GM18951 (cell line): ENCODE measurements at regions of chr11 and their contacts with region 1.

Region 1: DNA sequence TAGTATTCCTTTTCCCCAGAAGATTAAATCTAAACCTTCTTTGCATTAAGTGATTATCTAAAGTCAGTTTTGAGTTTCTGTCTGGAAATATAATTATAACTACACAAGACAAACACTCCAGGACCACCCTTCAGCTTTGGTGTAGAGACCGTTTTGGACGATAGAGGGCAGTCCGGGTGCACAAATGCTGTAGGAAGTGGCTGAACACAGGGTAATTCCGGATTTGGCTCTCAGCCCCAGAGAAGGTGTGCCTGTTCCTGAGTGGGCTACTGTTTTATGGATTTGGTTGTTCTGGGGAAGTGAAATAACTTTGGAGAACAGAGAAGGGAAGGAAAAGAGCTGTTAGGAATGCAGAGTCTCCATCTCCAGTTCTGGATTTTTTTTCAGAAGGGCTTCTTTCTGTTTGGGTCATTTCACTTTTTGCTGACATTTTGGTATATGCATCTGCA is 14.8 kb downstream of the EXT2 start:
- POLR2A ChIP-seq: no peak

Region 2: GRCh38 chr11:43376594-43376993 is 733.7 kb before region 1 on chr11:
- in situ Hi-C with region 1: no loop called
- POLR2A ChIP-seq: no peak

Region 3: GRCh38 chr11:44269369-44270351 is 159.4 kb after region 1 on chr11:
- in situ Hi-C with region 1: loop called (anchors 10 kb)
- POLR2A ChIP-seq: no peak

Region 4: GRCh38 chr11:44452827-44453572 is 342.7 kb after region 1 on chr11:
- in situ Hi-C with region 1: no loop called
- POLR2A ChIP-seq: no peak

Region 5: DNA sequence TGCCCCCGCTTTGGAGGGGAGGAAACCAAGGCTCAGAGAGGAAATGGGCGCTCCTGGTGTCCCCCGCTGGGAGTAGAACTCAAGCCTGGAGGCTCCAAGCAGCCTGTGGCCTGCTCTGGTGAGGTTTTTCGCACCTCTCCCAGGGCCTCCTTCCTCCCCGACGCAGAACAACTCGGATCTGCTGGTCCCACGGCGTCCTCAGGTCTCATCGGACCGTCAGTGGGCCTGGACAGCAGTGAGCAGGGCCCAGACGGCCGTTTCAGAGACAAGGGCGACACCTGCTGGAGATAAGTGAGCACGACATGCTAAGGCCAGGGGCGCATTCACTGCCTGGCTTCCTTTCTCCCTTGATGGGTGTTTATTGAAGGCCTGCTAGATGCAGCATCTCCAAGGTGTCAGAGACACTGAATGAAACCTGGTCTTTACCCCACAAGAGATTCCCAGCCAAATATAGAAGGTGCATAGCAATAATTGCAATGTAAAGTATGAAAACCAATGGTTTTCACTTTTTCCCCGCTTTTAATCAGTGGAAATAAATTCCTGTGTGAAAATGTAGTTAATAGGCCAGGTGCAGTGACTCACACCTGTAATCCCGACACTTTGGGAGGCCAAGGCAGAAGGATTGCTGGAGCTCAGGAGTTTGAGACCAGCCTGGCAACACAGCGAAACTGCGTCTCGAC is 428.3 kb after region 1 on chr11:
- in situ Hi-C with region 1: loop called (anchors 10 kb)
- POLR2A ChIP-seq: no peak